ENCODE measurements at regions of chr11 and their contacts with region 1.

Region 1: DNA sequence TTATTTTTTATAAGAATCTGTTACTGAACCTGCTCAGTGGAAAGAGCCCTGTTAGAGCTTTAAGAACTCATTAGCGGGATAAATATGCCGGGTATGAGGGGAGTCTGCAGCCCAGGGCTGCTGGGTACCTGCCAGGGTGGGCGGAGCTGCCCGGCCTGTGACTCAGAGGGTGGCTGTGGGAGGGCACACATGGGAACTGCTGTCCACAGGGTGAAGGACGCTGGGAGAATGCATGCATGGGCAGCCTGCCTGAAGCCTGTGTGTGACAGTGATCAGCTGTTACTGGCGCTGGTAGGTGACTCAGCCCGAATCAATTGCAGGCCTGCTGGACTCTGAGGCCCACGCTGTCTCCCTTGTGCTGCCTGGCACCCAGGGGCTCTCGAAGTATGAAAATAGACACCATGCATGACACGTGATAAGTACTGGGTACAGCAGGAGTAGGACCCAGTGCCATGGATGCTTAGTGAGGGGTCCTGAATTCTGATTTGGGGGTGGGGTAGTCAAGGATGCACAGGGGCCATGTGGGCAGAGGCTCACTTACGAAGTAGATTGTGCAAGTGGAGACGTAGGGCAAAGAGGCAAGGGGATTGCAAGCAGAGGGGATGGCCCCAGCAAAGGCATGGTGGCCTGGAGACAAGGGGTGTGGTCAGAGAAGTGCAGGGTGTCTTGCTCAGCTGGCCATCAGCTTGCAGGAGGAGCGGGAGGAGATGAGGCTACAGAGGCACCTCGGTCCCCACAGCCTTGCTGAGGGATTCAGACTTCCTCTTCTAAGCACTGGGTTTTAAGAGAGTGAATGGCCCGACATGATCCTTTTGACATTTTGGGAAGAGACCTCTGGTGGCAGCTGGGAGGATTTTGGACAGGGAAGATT is 36.5 kb downstream of the GRIK4 start:
- DNase-seq: no peak
- ATAC-seq: peak; percentile 40
- H3K4me3 Mint-ChIP-seq: no peak overlapping the region
- H3K27ac Mint-ChIP-seq: peak overlapping the region; percentile 2; the same call in 1 of the 2 replicates
- H3K4me1 Mint-ChIP-seq: peaks cover 52% of the 10 kb centered on the region
- H3K27me3 Mint-ChIP-seq: peaks cover 2% of the 10 kb centered on the region
- CTCF ChIP-seq: no peak

Region 2: DNA sequence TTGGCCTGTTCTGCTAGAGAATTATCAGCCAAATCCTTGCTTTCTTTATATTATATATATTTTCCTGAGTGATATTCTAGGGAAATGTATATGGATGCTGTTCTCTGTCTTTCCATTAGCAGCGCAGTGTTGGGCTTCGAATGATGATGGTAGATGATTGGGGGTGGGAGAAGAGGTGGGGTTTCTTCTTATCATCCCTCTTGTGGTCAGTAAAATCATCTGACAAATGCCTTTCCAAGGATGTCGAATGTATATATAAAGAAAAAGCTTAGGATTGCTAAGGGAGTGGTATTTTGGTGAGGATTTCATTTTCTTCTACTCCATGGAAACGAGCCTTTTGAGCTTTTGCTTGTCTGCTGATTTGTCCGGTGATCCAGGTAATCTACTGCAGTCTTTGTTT is 162.9 kb before region 1 on chr11:
- CTCF ChIA-PET with region 1: no interaction called
- POLR2A ChIA-PET with region 1: no interaction called
- DNase-seq: no peak
- ATAC-seq: peak; percentile 57
- H3K4me3 Mint-ChIP-seq: no peak overlapping the region
- H3K27ac Mint-ChIP-seq: no peak overlapping the region; the same call in 1 of the 2 replicates
- H3K4me1 Mint-ChIP-seq: peaks cover 31% of the 10 kb centered on the region
- H3K27me3 Mint-ChIP-seq: no peaks in the 10 kb centered on the region
- CTCF ChIP-seq: no peak

Region 3: GRCh38 chr11:120527111-120527761 is 20.8 kb before region 1 on chr11:
- CTCF ChIA-PET with region 1: interaction called, 10 read pairs
- POLR2A ChIA-PET with region 1: interaction called, 3 read pairs
- DNase-seq: peak; percentile 86
- ATAC-seq: peak; percentile 91
- H3K4me3 Mint-ChIP-seq: peak overlapping the region; percentile 25; the same call in 1 of the 2 replicates
- H3K27ac Mint-ChIP-seq: peak overlapping the region; percentile 89
- H3K4me1 Mint-ChIP-seq: peaks cover 48% of the 10 kb centered on the region
- H3K27me3 Mint-ChIP-seq: no peaks in the 10 kb centered on the region; the same call in 1 of the 2 replicates
- CTCF ChIP-seq: no peak